ENCODE measurements at regions of chr11 and their contacts with region 1.

Region 1: GRCh38 chr11:133927690-133928627 is 28.8 kb downstream of the IGSF9B start:
- DNase-seq: peak; percentile 30
- ATAC-seq: peak; percentile 53
- H3K4me3 ChIP-seq: no peak overlapping the region
- H3K4me3 Mint-ChIP-seq: peak overlapping the region; percentile 65
- H3K27ac ChIP-seq: no peak overlapping the region
- H3K27ac Mint-ChIP-seq: no peak overlapping the region
- H3K4me1 ChIP-seq: peaks cover 0 to 8% of the 10 kb centered on the region in 2 donors
- H3K4me1 Mint-ChIP-seq: peaks cover 5% of the 10 kb centered on the region
- H3K27me3 ChIP-seq: peaks cover 0 to 3% (median 0%) of the 10 kb centered on the region in 4 experiments
- H3K27me3 Mint-ChIP-seq: peaks cover 10% of the 10 kb centered on the region
- CTCF ChIP-seq: peak; percentile 62

Region 2: DNA sequence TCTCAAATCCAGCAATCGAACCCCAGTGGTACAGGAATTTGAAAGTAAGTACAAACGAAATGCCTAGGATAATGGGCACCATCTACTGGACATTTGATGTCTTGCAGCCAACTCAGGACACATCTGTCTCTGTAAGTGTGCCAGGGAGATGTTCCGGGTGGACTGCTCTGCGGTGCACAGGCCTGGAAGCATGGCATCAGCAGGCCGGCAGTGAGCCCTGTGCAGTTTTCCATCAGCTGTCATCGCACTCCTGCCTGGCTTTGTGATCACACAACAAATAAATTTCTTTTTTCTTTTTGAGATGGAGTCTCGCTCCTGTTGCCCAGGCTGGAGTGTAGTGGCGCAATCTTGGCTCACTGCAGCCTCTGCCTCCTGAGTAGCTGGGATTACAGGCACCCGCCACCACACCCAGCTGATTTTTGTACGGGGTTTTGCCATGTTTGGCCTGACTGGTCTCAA is 211.9 kb after region 1 on chr11:
- CTCF ChIA-PET with region 1: interaction called, 4 read pairs
- POLR2A ChIA-PET with region 1: no interaction called
- intact Hi-C with region 1: loop called (anchors 2 kb)
- DNase-seq: peak; percentile 73
- ATAC-seq: peak; percentile 64
- H3K4me3 ChIP-seq: no peak overlapping the region
- H3K4me3 Mint-ChIP-seq: no peak overlapping the region
- H3K27ac ChIP-seq: no peak overlapping the region
- H3K27ac Mint-ChIP-seq: no peak overlapping the region
- H3K4me1 ChIP-seq: no peaks in the 10 kb centered on the region
- H3K4me1 Mint-ChIP-seq: no peaks in the 10 kb centered on the region
- H3K27me3 ChIP-seq: no peaks in the 10 kb centered on the region
- H3K27me3 Mint-ChIP-seq: no peaks in the 10 kb centered on the region
- CTCF ChIP-seq: peak; percentile 84